B cell (primary cell): ENCODE measurements at regions of chr15 and their contacts with region 1.

Region 1: DNA sequence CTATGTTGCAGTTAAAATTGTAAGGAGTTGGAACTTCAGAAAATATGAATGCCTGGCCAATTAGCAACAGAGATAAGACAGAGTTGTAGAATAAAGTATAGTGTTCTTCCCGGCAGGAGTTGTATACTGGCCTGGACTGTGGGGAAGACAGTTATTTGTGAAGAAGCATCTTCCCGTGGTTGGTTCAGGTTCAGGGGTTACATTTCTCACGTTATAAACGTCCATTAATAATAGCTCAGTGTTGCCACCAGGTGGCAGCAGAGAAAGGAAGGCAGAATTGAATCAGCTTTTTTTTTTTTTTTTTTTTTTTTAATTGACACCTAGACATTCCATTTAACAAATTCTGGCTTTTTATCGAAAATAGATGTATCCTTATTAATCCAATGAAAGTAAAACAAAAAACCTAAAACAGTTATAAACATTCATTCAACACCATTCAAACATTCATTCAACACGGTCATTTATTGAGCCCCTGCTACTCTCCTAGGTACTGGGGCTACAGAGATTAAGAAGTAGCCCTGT is 66.4 kb upstream of the NR2E3 start:
- DNase-seq: peak; percentile 62
- ATAC-seq: no peak
- H3K4me3 ChIP-seq: no peak overlapping the region
- H3K4me3 Mint-ChIP-seq: no peak overlapping the region
- H3K27ac ChIP-seq: no peak overlapping the region
- H3K27ac Mint-ChIP-seq: no peak overlapping the region
- H3K4me1 ChIP-seq: no peaks in the 10 kb centered on the region
- H3K4me1 Mint-ChIP-seq: no peaks in the 10 kb centered on the region
- H3K27me3 ChIP-seq: no peaks in the 10 kb centered on the region
- H3K27me3 Mint-ChIP-seq: peaks cover 20% of the 10 kb centered on the region
- CTCF ChIP-seq: peak; percentile 90

Region 2: DNA sequence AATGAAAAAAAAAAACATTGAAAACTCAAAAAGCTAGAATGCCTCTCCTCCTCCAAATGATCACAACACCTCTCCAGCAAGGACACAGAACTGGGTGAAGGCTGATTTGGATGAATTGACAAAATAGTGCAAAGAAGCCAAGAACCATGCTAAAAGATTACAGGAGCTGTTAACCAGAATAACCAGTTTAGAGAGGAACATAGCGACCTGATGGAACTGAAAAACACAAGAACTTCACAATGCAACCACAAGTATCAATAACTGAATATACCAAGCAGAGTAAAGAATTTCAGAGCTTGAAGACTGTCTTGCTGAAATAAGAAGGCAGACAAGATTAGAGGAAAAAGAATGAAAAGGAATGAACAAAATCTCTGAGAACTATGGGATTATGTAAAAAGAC is 719.3 kb before region 1 on chr15:
- CTCF ChIA-PET with region 1: no interaction called
- POLR2A ChIA-PET with region 1: no interaction called
- intact Hi-C with region 1: no loop called
- DNase-seq: no peak
- ATAC-seq: no peak
- H3K4me3 ChIP-seq: no peak overlapping the region
- H3K4me3 Mint-ChIP-seq: no peak overlapping the region
- H3K27ac ChIP-seq: no peak overlapping the region
- H3K27ac Mint-ChIP-seq: no peak overlapping the region
- H3K4me1 ChIP-seq: no peaks in the 10 kb centered on the region
- H3K4me1 Mint-ChIP-seq: no peaks in the 10 kb centered on the region
- H3K27me3 ChIP-seq: no peaks in the 10 kb centered on the region
- H3K27me3 Mint-ChIP-seq: no peaks in the 10 kb centered on the region
- CTCF ChIP-seq: no peak

Region 3: GRCh38 chr15:71780115-71780976 is 36.4 kb after region 1 on chr15:
- CTCF ChIA-PET with region 1: interaction called, 6 read pairs
- POLR2A ChIA-PET with region 1: no interaction called
- intact Hi-C with region 1: loop called (anchors 1 kb)
- DNase-seq: peak; percentile 59
- ATAC-seq: peak; percentile 51
- H3K4me3 ChIP-seq: no peak overlapping the region
- H3K4me3 Mint-ChIP-seq: no peak overlapping the region
- H3K27ac ChIP-seq: no peak overlapping the region
- H3K27ac Mint-ChIP-seq: no peak overlapping the region
- H3K4me1 ChIP-seq: no peaks in the 10 kb centered on the region
- H3K4me1 Mint-ChIP-seq: peaks cover 3% of the 10 kb centered on the region
- H3K27me3 ChIP-seq: no peaks in the 10 kb centered on the region
- H3K27me3 Mint-ChIP-seq: peaks cover 15% of the 10 kb centered on the region
- CTCF ChIP-seq: peak; percentile 93

Region 4: DNA sequence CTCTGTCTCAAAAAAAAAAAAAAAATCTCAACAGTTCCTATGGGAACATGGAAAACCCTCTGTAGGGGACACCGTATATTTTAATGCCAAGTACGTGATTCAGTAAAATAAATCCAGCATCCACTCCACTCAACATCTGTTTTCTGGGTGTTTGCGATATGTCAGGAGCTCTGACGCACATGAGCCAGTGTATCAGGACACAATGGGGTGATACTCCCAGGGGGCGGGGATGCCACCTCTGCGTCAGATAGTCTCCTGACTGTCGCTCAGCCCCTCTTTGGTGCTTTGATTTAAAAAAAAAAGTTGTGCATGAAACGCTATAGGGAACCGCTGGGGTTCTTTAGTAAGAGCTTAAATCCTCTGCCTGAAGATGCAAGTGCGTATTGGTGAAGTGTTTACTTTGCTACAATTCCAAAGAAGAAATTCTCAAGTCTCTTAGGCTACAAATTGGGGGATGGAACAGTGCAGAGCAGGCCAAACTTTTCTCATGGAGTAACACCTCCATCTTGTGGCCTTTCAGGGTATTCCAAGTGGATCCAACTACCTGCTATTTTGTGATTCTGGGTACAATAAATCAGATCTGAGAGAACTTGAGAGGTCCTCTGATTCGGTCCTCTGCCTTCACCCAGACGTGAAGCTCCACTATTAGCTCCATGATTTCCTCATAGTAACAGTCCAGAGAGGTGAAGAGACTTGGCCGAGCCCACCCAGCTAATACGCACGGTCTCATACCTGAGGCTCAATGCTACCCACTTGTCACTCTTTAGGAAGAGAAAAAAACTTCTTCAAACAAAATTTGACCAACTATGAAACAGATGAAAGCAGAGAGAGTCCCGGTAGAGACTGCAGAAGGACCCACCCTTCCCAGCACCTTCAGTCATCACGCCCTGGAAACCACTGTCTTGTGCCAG is 57.2 kb after region 1 on chr15:
- CTCF ChIA-PET with region 1: interaction called, 16 read pairs
- POLR2A ChIA-PET with region 1: no interaction called
- intact Hi-C with region 1: no loop called
- DNase-seq: no peak
- ATAC-seq: no peak
- H3K4me3 ChIP-seq: no peak overlapping the region
- H3K4me3 Mint-ChIP-seq: no peak overlapping the region
- H3K27ac ChIP-seq: no peak overlapping the region
- H3K27ac Mint-ChIP-seq: no peak overlapping the region
- H3K4me1 ChIP-seq: no peaks in the 10 kb centered on the region
- H3K4me1 Mint-ChIP-seq: peaks cover 2% of the 10 kb centered on the region
- H3K27me3 ChIP-seq: peaks cover 0 to 6% (median 3%) of the 10 kb centered on the region in 4 experiments
- H3K27me3 Mint-ChIP-seq: peaks cover 19% of the 10 kb centered on the region
- CTCF ChIP-seq: peak; percentile 46

Region 5: DNA sequence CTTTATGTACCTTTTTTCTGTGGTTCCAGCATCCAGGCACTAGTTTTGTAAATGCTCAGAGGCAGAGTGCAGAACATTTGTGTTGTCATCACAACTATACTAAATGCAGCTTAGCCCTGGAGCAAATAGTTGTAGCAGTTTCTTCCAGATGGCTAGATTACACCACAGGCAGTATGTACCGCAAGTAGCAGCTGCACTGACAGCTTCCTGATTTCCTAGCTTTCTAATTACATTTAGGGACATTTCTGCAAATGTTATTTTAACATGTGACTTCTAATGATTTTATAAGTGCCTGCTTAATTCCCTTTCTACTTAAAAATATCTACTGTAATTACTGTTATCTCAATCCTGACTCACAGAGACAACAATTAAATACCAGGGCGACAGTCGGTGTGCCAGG is 172.9 kb after region 1 on chr15:
- CTCF ChIA-PET with region 1: no interaction called
- POLR2A ChIA-PET with region 1: no interaction called
- intact Hi-C with region 1: no loop called
- DNase-seq: no peak
- ATAC-seq: no peak
- H3K4me3 ChIP-seq: no peak overlapping the region
- H3K4me3 Mint-ChIP-seq: no peak overlapping the region
- H3K27ac ChIP-seq: no peak overlapping the region
- H3K27ac Mint-ChIP-seq: no peak overlapping the region
- H3K4me1 ChIP-seq: no peaks in the 10 kb centered on the region
- H3K4me1 Mint-ChIP-seq: no peaks in the 10 kb centered on the region
- H3K27me3 ChIP-seq: no peaks in the 10 kb centered on the region
- H3K27me3 Mint-ChIP-seq: no peaks in the 10 kb centered on the region
- CTCF ChIP-seq: no peak